A673 (cell line): ENCODE measurements at regions of chr11 and their contacts with region 1.

Region 1: DNA sequence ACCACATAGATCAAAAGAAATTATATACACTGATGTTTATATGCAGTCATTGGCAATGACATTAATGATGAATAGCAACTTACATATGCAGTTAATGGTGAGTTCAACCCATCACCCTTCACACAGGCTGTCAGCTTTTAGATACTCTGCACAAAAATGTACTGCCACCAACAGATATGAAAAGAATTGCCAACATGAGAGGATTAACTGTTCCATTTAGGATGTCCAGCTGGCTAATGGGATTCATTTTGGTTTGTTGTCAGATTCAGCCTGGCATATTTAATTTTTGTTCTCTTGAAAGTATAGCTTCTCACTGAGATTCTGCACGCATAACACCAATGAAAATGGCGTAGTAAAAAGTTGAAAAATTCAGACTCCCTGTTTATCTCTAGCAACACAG is 554.0 kb upstream of the ARHGAP42 start:
- DNase-seq: no peak
- H3K4me3 ChIP-seq: no peak overlapping the region
- H3K27ac ChIP-seq: no peak overlapping the region
- H3K4me1 ChIP-seq: no peaks in the 10 kb centered on the region
- H3K27me3 ChIP-seq: no peaks in the 10 kb centered on the region
- CTCF ChIP-seq: no peak

Region 2: DNA sequence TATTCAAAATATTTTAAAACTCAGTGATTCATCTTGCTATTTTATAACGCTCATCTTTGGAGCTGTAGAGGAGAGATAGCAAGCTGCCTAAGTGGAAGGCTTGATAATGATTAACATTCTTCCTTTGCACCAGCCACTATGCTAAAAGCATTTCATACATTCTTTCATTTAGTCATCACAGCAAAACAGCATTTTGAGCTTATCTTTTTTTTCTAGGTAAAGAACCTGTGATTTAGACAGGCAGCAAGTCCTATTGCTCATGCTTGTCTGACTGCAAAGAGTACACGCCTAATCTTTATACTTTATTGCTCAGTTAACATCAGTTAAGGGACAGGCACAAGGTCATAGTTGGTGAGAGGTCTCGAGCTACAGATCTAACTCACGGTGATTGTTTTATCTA is 159.1 kb before region 1 on chr11:
- CTCF ChIA-PET with region 1: no interaction called
- POLR2A ChIA-PET with region 1: no interaction called
- intact Hi-C with region 1: no loop called
- DNase-seq: no peak
- H3K4me3 ChIP-seq: no peak overlapping the region
- H3K27ac ChIP-seq: no peak overlapping the region
- H3K4me1 ChIP-seq: peaks cover 3% of the 10 kb centered on the region
- H3K27me3 ChIP-seq: no peaks in the 10 kb centered on the region
- CTCF ChIP-seq: no peak

Region 3: DNA sequence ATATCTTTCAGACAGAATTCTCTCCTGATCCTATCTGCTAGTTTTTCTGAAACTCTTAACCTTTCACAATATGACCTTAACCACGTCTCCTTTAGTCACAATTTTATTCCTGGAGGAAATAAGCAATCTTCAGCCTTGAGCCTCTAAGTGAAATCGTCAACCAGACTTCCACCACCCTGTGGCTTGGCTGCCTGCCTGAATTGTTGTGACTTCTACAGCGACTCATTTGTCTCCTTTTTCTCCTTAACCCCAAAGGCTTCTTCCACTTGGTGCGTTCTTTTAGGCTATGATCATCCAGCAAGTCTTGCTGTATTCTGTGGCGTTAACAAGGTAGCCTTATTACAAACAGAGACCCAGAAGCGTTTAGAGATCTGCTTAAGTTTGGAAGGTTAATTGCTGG is 18.8 kb after region 1 on chr11:
- CTCF ChIA-PET with region 1: no interaction called
- POLR2A ChIA-PET with region 1: no interaction called
- intact Hi-C with region 1: loop called (anchors 1 kb)
- DNase-seq: peak; percentile 79
- H3K4me3 ChIP-seq: no peak overlapping the region
- H3K27ac ChIP-seq: no peak overlapping the region
- H3K4me1 ChIP-seq: peaks cover 19% of the 10 kb centered on the region
- H3K27me3 ChIP-seq: no peaks in the 10 kb centered on the region
- CTCF ChIP-seq: no peak

Region 4: GRCh38 chr11:101848262-101848661 is 1715.1 kb after region 1 on chr11:
- CTCF ChIA-PET with region 1: no interaction called
- POLR2A ChIA-PET with region 1: no interaction called
- intact Hi-C with region 1: no loop called
- DNase-seq: peak; percentile 24
- H3K4me3 ChIP-seq: no peak overlapping the region
- H3K27ac ChIP-seq: no peak overlapping the region
- H3K4me1 ChIP-seq: no peaks in the 10 kb centered on the region
- H3K27me3 ChIP-seq: no peaks in the 10 kb centered on the region
- CTCF ChIP-seq: peak; percentile 65; the same call in 1 of the 2 replicates